ENCODE measurements at regions of chr11 and their contacts with region 1.

Region 1: DNA sequence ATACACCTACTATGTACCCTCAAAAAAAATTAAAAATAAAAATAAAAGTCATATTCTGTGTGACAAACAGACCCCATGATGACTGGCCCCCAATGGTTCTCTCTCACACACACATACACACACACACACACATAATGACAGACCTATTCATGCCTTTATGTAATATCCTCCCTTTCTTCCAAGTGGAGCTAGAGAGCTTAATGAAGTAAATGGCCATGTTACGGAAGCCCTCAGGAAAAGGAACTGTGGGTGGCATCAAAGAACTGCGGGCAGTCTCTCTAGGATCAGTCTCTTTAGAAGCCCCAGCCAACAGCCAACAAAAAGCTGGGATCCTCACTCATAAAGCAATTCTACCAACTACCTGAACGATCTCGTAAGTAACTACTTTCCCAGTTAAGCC is 125.5 kb downstream of the SIK3 start:
- DNase-seq: peak; percentile 60 to 68 (median 65)
- H3K4me3 ChIP-seq: peak overlapping the region in 1 of 3 experiments; percentile 11
- H3K4me3 Mint-ChIP-seq: peak overlapping the region in 1 of 2 donors; percentile 56
- H3K27ac ChIP-seq: peak overlapping the region; percentile 40 to 72
- H3K27ac Mint-ChIP-seq: peak overlapping the region; percentile 71 to 91 (median 86)
- H3K4me1 ChIP-seq: peaks cover 25 to 43% of the 10 kb centered on the region in 2 donors
- H3K4me1 Mint-ChIP-seq: peaks cover 38% of the 10 kb centered on the region
- H3K27me3 ChIP-seq: no peaks in the 10 kb centered on the region
- H3K27me3 Mint-ChIP-seq: no peaks in the 10 kb centered on the region
- CTCF ChIP-seq: peak; percentile 33

Region 2: GRCh38 chr11:117010808-117011540 is 38.3 kb after region 1 on chr11:
- intact Hi-C with region 1: loop called (anchors 5 kb)
- DNase-seq: peak; percentile 33 to 60 (median 34)
- H3K4me3 ChIP-seq: no peak overlapping the region
- H3K4me3 Mint-ChIP-seq: no peak overlapping the region
- H3K27ac ChIP-seq: peak overlapping the region in 1 of 2 donors; percentile 44
- H3K27ac Mint-ChIP-seq: peak overlapping the region in 4 of 7 donors; percentile 6 to 77 (median 30)
- H3K4me1 ChIP-seq: peaks cover 20 to 59% of the 10 kb centered on the region in 2 donors
- H3K4me1 Mint-ChIP-seq: peaks cover 48% of the 10 kb centered on the region
- H3K27me3 ChIP-seq: no peaks in the 10 kb centered on the region
- H3K27me3 Mint-ChIP-seq: no peaks in the 10 kb centered on the region
- CTCF ChIP-seq: no peak

Region 3: DNA sequence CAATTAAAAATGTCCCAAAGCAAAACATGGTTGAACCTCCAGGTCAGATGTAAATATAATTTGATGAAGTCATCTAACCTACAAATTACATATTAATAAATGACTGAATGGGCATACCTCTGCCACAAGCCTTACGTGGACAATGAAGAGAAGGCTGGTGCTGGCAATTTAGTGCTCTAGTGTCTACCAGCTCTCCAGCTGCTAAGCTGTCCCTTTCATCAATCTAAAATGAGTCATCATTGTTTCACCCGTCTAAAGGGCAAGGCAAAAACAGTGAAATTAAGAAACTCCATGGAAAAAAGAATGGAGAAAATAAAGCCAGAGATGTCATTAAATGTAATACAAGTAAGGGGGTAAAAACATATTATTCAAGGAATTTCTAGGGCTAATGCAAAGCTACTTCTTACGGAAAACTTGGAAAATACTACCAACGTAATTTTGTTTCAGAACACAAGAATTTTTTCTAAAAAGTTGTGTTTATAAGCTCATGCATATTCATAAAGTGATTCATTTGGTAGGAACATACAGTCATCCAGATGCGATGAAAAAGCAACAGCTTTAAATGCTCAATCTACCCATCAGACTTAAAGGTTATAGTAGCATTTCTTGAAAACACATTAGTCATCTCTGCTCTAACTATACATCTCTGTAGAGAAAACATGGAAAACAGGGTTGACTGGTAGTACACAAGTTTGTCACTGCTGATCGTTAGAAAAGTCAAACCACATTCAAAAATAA is 54.1 kb after region 1 on chr11:
- intact Hi-C with region 1: loop called (anchors 5 kb)
- DNase-seq: peak in 2 of 3 donors; percentile 39 to 56
- H3K4me3 ChIP-seq: no peak overlapping the region
- H3K4me3 Mint-ChIP-seq: no peak overlapping the region
- H3K27ac ChIP-seq: peak overlapping the region in 1 of 2 donors; percentile 10
- H3K27ac Mint-ChIP-seq: peak overlapping the region in 4 of 7 donors; percentile 12 to 74 (median 31)
- H3K4me1 ChIP-seq: peaks cover 32 to 39% of the 10 kb centered on the region in 2 donors
- H3K4me1 Mint-ChIP-seq: peaks cover 62% of the 10 kb centered on the region
- H3K27me3 ChIP-seq: no peaks in the 10 kb centered on the region
- H3K27me3 Mint-ChIP-seq: no peaks in the 10 kb centered on the region
- CTCF ChIP-seq: no peak

Measured in CD14-positive monocyte (primary cell).